ENCODE measurements at regions of chr11 and their contacts with region 1.

Region 1: GRCh38 chr11:78416305-78417178 is 1.1 kb downstream of the GAB2 start:
- DNase-seq: peak; percentile 78
- H3K4me3 Mint-ChIP-seq: peak overlapping the region; percentile 97
- H3K27ac Mint-ChIP-seq: peak overlapping the region; percentile 92
- H3K4me1 Mint-ChIP-seq: peaks cover 64% of the 10 kb centered on the region
- H3K27me3 Mint-ChIP-seq: peaks cover 8% of the 10 kb centered on the region

Region 2: DNA sequence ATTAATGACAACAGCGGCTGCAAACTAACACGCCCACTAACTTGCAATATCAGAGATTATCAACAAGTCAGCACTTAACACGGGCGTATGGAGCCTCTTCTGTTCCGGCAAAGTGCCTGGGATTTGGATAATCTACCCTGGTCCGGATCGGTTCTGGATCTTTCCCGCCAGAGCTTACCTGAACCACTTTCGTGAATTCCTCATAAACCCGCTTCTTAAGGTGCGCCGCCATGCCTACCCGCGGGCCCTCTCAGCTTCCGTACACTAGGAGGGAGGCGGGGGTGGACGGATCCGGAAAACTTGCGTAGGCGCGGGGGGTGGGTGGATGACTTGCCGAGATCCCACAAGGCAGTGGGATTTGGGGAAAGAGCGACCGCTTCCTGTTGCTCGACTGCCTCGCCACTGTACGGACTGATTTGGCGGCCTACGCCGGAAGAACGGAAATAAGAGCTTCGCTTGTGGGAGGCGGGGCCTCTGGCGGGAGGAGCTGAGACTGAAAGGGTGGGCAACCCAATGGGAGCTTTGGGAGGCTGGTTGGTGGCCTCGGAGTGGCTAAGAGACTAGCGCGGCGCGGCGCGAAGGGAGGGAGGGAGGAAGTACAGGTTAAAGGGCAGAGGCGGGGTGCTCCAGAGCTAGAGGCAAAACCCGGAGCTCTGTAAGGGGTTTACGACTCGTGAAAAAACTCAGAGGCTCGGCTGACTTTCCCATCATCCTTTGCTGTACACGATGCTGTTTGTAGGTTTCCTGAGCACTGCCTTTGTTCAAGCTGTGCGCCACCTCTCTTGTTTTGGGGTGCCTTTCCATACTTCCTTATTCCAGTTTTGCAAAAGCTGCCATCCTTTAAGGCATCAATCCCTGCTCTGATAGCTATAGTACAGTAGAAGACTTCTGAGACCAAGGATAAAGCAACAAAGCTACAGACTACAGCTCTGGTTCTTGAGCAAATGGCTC is 421.9 kb before region 1 on chr11 and contains the start of gene INTS4:
- intact Hi-C with region 1: loop called (anchors 2 kb)
- DNase-seq: peak; percentile 98
- H3K4me3 Mint-ChIP-seq: peak within 1 kb of the TSS; percentile 92
- H3K27ac Mint-ChIP-seq: peak within 1 kb of the TSS; percentile 84
- H3K4me1 Mint-ChIP-seq: peaks cover 30% of the 10 kb centered on the region
- H3K27me3 Mint-ChIP-seq: no peaks in the 10 kb centered on the region
- total RNA-seq, gene INTS4: 58.2 and 63.6 TPM in 2 replicates

Region 3: DNA sequence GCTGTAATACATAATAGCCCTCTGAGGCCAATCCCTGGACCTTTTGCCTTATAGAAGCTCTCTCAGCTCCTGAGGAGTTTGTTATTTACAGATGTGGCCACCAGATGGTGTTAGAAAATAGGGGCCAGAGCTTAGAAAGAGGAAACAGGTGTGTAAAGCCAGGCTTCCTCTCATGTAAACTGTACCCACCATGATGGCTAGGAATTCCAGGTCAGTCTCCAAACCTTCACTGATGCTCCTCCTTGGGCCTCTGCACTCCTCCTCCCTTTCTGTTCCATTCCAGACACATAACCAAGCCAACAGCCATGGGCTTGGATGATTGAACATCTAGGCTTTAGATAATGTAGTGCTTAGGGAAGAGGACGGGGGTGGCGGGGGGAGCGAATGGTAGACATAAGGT is 188.1 kb before region 1 on chr11:
- intact Hi-C with region 1: loop called (anchors 1 kb)
- DNase-seq: peak; percentile 21
- H3K4me3 Mint-ChIP-seq: no peak overlapping the region
- H3K27ac Mint-ChIP-seq: no peak overlapping the region
- H3K4me1 Mint-ChIP-seq: peaks cover 75% of the 10 kb centered on the region
- H3K27me3 Mint-ChIP-seq: no peaks in the 10 kb centered on the region

Region 4: DNA sequence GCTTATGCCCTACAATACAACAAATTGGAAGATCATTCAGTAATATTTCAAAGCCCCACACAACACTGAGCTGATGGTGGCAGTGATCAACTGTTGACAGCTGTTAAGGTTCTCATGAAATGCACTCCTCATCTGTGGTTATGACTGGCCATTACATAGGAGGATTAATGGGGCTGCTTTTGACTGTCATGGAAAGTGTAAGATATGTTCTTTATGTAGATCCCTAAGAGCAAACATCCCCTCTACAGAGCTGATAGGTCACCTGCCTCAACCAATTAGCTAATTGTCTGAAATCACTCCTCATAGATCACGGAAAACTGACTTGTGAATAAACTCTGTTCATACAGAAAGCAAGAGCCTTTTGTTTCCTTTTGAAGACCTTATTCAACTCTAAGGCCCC is 77.1 kb before region 1 on chr11:
- intact Hi-C with region 1: loop called (anchors 5 kb)
- DNase-seq: no peak
- H3K4me3 Mint-ChIP-seq: peak overlapping the region; percentile 31
- H3K27ac Mint-ChIP-seq: peak overlapping the region; percentile 94
- H3K4me1 Mint-ChIP-seq: peaks cover 86% of the 10 kb centered on the region
- H3K27me3 Mint-ChIP-seq: no peaks in the 10 kb centered on the region

Region 5: DNA sequence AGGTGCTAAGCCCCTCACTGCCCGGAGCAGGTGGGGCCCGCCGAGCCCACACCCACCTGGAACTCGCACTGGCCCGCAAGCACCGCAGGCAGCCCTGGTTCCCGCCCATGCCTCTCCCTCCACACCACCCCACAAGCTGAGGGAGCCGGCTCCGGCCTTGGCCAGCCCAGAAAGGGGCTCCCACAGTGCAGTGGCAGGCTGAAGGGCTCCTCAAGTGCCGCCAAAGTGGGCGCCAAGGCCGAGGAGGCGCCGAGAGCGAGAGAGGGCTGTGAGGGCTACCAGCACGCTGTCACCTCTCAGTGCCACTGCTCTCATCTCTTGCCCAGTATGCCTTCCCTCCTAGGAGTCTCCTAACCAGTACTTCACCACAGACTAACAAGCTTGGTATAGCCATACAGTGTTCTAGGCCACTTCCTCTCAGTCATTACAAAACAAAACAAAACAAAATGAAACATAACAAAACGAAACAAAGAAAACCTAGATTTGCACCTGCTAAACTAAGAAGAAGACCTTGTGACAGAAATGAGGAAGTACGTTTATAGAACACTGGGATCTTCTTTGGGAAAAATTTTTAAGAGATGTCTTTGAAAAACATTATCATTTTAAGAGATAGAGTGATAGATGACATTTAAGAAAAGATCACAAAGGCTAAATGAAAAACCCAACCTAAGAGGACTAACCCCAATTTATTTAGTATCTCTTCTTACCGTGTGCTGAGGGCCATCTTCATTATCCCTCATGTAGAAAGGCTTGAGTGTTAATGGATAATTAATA is 48.8 kb after region 1 on chr11:
- intact Hi-C with region 1: loop called (anchors 1 kb)
- DNase-seq: peak; percentile 59
- H3K4me3 Mint-ChIP-seq: peak overlapping the region; percentile 73
- H3K27ac Mint-ChIP-seq: peak overlapping the region; percentile 92
- H3K4me1 Mint-ChIP-seq: peaks cover 45% of the 10 kb centered on the region
- H3K27me3 Mint-ChIP-seq: no peaks in the 10 kb centered on the region

Region 6: GRCh38 chr11:78645226-78646202 is 229.0 kb after region 1 on chr11:
- intact Hi-C with region 1: loop called (anchors 2 kb)
- DNase-seq: peak; percentile 35
- H3K4me3 Mint-ChIP-seq: no peak overlapping the region
- H3K27ac Mint-ChIP-seq: peak overlapping the region; percentile 69
- H3K4me1 Mint-ChIP-seq: peaks cover 35% of the 10 kb centered on the region
- H3K27me3 Mint-ChIP-seq: no peaks in the 10 kb centered on the region

Region 7: DNA sequence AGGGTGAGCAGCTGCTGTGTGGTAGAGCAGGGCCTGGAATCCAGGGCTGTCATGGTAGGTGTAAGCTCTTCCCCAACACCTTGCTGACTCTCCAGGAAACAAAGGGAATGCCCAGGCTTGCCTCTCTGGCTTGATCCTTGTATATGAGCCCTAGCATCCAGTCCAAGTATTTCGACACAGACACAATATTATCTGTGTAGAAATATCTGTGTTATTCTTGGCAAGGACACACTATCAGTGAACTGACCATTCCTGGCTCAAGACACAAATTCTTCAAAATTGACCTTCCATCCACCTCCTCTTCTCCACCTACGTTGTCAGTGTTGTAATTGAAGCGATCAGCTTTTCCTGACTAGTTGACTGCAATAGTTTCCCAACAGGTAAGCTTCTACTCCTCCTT is 470.1 kb after region 1 on chr11:
- intact Hi-C with region 1: no loop called
- DNase-seq: no peak
- H3K4me3 Mint-ChIP-seq: no peak overlapping the region
- H3K27ac Mint-ChIP-seq: no peak overlapping the region
- H3K4me1 Mint-ChIP-seq: no peaks in the 10 kb centered on the region
- H3K27me3 Mint-ChIP-seq: peaks cover 1% of the 10 kb centered on the region